T-cell (primary cell): ENCODE measurements at regions of chr20 and their contacts with region 1.

Region 1: DNA sequence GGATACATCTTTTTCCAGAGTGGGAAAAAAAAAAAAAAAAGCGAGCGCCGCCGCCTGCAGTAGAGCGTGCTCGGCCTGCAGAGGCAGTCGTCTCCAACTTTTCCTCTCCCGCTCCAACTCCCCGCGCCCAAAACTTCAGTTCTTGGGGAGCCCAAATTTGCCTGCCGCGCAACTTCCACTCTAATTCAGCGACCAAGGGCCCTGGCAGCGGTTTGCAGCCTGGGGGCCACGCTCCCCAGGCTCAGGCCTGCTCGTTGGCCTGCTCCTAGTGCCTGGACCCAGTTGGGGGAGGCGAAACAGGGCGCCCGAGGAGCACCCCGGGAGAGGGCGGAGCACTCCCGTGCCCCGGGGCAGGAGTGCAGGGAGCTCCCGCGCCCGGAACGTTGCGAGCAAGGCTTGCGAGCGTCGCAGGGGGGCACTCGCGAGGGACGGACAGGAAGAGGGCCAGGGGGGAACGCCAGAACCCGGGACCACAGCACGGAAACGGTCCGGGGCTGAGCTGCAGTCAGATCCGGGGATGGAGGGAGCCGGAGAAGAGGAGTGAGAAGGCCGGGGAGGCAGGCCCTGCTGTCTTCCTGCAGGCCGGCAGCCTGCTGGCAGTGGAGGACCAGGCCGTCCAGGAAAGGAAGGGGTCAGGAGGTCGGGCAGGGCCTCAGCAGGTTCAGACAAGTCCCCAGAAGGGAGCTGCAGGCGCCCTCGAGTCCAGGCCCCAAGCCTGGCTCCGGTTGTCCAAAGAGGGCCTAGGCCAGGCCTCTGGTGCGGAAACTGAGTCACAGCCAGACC is at the start of gene STX16:
- DNase-seq: peak; percentile 66 to 93 (median 79)
- ATAC-seq: peak; percentile 67 to 77 (median 76)
- H3K4me3 ChIP-seq: peak within 1 kb of the TSS; percentile 95 to 97
- H3K4me3 Mint-ChIP-seq: peak within 1 kb of the TSS; percentile 97 to 98 (median 98)
- H3K27ac ChIP-seq: peak within 1 kb of the TSS; percentile 95
- H3K27ac Mint-ChIP-seq: peak within 1 kb of the TSS; percentile 98
- H3K4me1 ChIP-seq: peaks cover 26 to 29% of the 10 kb centered on the region in 2 experiments
- H3K4me1 Mint-ChIP-seq: peaks cover 26 to 33% (median 27%) of the 10 kb centered on the region in 3 donors
- H3K27me3 ChIP-seq: no peaks in the 10 kb centered on the region
- H3K27me3 Mint-ChIP-seq: peaks cover 0 to under 1% of the 10 kb centered on the region in 2 donors
- total RNA-seq, gene STX16: 154 to 213 (median 178) TPM

Region 2: GRCh38 chr20:57616143-57616951 is 1034.6 kb before region 1 on chr20:
- CTCF ChIA-PET with region 1: no interaction called
- POLR2A ChIA-PET with region 1: interaction called in 1 of 2 experiments, 17 read pairs
- DNase-seq: peak in 1 of 35 experiments; percentile 21
- ATAC-seq: no peak
- H3K4me3 ChIP-seq: no peak overlapping the region
- H3K4me3 Mint-ChIP-seq: no peak overlapping the region
- H3K27ac ChIP-seq: no peak overlapping the region
- H3K27ac Mint-ChIP-seq: peak overlapping the region in 1 of 2 donors; percentile 44
- H3K4me1 ChIP-seq: peaks cover 33 to 71% of the 10 kb centered on the region in 2 experiments
- H3K4me1 Mint-ChIP-seq: peaks cover 44 to 57% (median 53%) of the 10 kb centered on the region in 3 donors
- H3K27me3 ChIP-seq: no peaks in the 10 kb centered on the region
- H3K27me3 Mint-ChIP-seq: no peaks in the 10 kb centered on the region

Region 3: DNA sequence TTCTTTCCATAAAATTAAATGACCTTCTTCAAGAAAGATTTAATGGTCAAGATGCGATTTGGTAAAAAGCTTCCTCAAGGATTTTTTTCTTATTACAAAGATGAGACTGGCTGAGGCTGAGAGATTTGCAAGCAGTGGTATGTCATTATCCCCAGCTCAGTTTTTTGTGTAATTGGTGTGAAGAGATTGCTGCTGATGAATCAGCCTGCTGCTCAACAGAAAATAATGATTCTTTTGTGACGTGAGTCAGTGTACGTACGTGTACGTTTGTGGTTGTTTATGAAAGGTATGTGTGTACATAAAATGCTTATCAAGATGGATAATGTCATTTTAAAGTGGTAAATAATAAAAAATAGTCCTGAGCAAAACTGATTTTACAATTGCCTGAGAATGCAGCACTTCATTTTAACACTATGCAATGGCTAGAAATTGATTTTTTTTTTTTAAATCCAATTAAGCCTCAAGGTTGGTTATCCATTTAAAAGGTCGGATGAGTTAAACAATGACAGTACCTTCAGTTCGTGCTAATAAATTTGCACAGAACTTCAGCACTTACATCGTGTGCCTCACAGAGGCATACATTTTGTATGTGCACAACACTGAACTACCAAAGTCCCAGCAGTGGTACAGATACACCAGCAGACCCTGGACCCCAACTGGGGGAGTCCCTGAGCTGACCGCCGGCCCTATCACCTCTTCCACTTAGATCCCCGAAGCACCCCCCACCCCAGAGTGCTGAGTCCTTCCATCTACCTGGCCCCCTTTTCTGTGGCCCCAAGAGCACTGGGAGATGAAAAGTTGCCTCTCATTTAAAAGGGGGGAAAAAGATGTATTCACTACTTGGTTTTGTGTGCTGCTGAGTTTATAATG is 31.9 kb after region 1 on chr20:
- CTCF ChIA-PET with region 1: interaction called in 1 of 2 experiments, 8 read pairs
- POLR2A ChIA-PET with region 1: interaction called in 1 of 2 experiments, 15 read pairs
- DNase-seq: no peak
- ATAC-seq: no peak
- H3K4me3 ChIP-seq: no peak overlapping the region
- H3K4me3 Mint-ChIP-seq: no peak overlapping the region
- H3K27ac ChIP-seq: no peak overlapping the region
- H3K27ac Mint-ChIP-seq: no peak overlapping the region
- H3K4me1 ChIP-seq: no peaks in the 10 kb centered on the region
- H3K4me1 Mint-ChIP-seq: peaks cover 0 to 4% (median 0%) of the 10 kb centered on the region in 3 donors
- H3K27me3 ChIP-seq: no peaks in the 10 kb centered on the region
- H3K27me3 Mint-ChIP-seq: no peaks in the 10 kb centered on the region

Region 4: DNA sequence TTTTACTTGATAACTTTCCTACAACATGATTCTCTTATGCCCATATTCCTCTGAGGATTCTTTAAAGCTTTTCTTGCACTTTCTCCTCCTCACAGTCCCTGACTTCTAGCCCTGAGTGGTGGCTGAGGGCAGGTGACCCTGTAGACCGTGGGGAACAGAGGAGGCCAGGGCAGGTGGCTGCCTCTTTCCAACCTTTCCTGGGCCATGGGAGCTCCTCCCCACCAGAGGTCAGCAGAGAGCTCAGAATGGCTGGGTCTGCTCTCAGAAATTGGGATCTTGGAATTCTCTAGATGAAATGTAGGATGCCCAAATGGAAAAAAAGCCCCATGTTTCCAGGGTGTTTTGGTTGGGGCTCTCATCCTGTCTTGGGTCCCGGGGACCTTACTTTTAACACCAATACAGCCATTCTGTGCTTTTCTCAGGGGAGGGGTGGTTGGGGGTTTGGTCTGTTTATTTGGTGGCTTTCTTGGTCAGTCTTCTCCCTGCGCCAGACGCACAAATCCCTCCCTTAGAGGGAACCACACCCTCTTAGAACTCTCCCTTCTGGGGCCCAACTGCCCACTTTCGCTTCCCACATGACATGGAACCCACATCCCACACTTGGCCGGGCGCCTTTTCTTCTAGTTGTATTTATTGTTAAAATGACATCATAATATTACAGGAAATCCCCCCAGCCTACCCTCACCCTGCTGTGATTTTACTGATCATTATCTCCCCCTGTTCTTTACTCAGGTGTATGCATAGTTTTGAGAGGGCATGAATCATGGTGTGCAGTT is 219.5 kb after region 1 on chr20:
- CTCF ChIA-PET with region 1: interaction called in 1 of 2 experiments, 3 read pairs
- POLR2A ChIA-PET with region 1: interaction called in 1 of 2 experiments, 10 read pairs
- DNase-seq: peak in 16 of 35 experiments; percentile 27 to 73 (median 44)
- ATAC-seq: peak; percentile 79 to 83 (median 80)
- H3K4me3 ChIP-seq: no peak overlapping the region
- H3K4me3 Mint-ChIP-seq: no peak overlapping the region
- H3K27ac ChIP-seq: no peak overlapping the region
- H3K27ac Mint-ChIP-seq: no peak overlapping the region
- H3K4me1 ChIP-seq: no peaks in the 10 kb centered on the region
- H3K4me1 Mint-ChIP-seq: peaks cover 0 to 6% (median 5%) of the 10 kb centered on the region in 3 donors
- H3K27me3 ChIP-seq: peaks cover 0 to 4% of the 10 kb centered on the region in 2 experiments
- H3K27me3 Mint-ChIP-seq: peaks cover 2 to 4% of the 10 kb centered on the region in 2 donors

Region 5: DNA sequence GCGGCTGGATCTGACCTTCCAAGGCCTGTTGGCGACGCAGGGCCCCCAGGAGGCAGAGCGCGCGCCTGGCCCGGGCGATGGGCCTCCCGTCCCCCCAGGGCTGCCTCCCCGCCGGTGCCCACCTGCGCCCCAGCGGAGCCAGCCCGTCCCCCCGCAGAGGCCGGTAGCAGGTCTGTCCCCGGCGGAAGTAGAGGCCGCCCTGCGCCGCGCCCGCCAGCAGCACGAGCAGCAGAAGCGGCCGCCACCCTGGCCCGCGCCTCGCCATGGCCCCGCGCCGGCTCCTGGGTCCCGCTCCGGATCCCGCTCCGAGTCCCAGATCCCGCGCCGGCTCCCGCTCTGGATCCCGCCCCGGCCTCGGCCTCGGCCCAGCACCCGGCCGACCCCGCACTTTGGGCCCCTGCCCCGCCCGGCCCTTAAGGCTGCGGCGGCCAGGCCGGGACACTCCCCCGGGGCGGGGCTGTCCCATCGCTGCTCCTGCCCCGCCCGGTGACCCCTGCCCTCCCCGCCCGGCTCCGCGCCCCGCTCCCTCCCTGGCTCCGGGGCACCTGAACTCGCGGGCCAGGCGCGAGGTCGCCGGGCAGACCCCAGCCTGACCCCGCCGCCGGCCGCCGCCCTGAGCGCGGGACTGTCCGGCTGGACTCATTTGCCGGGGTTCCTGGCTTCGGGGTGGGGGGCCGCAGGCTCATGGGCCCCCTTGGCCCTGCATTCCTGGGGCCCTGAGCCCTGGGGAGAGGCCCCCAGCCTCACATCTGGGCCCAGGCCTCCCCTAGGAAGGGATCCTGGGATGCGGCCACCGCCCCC is 356.1 kb after region 1 on chr20 and contains the start of gene CTSZ:
- CTCF ChIA-PET with region 1: no interaction called
- POLR2A ChIA-PET with region 1: no interaction called
- DNase-seq: peak in 17 of 35 experiments; percentile 11 to 53 (median 30)
- ATAC-seq: peak; percentile 62 to 76 (median 68)
- H3K4me3 ChIP-seq: peak within 1 kb of the TSS; percentile 35 to 51
- H3K4me3 Mint-ChIP-seq: peak within 1 kb of the TSS; percentile 70 to 83 (median 81)
- H3K27ac ChIP-seq: no peak within 1 kb of the TSS
- H3K27ac Mint-ChIP-seq: peak within 1 kb of the TSS; percentile 67 to 90
- H3K4me1 ChIP-seq: peaks cover 6 to 39% of the 10 kb centered on the region in 2 experiments
- H3K4me1 Mint-ChIP-seq: peaks cover 49 to 51% (median 51%) of the 10 kb centered on the region in 3 donors
- H3K27me3 ChIP-seq: peaks cover 0 to 8% of the 10 kb centered on the region in 2 experiments
- H3K27me3 Mint-ChIP-seq: no peaks in the 10 kb centered on the region
- total RNA-seq, gene CTSZ: 16.8 to 37.1 (median 26.1) TPM